Endothelial cell of umbilical vein (primary cell): ENCODE measurements at regions of chr11 and their contacts with region 1.

Region 1: GRCh38 chr11:57324886-57325734 is at the start of gene TNKS1BP1:
- DNase-seq: peak; percentile 96
- H3K4me3 ChIP-seq: peak within 1 kb of the TSS; percentile 58 to 86 (median 63)
- H3K27ac ChIP-seq: peak within 1 kb of the TSS; percentile 95
- H3K4me1 ChIP-seq: peaks cover 37% of the 10 kb centered on the region
- H3K27me3 ChIP-seq: no peaks in the 10 kb centered on the region
- CTCF ChIP-seq: no peak
- POLR2A ChIP-seq: peak; percentile 70
- total RNA-seq, gene TNKS1BP1: 93.6 and 111 TPM in 2 replicates

Region 2: DNA sequence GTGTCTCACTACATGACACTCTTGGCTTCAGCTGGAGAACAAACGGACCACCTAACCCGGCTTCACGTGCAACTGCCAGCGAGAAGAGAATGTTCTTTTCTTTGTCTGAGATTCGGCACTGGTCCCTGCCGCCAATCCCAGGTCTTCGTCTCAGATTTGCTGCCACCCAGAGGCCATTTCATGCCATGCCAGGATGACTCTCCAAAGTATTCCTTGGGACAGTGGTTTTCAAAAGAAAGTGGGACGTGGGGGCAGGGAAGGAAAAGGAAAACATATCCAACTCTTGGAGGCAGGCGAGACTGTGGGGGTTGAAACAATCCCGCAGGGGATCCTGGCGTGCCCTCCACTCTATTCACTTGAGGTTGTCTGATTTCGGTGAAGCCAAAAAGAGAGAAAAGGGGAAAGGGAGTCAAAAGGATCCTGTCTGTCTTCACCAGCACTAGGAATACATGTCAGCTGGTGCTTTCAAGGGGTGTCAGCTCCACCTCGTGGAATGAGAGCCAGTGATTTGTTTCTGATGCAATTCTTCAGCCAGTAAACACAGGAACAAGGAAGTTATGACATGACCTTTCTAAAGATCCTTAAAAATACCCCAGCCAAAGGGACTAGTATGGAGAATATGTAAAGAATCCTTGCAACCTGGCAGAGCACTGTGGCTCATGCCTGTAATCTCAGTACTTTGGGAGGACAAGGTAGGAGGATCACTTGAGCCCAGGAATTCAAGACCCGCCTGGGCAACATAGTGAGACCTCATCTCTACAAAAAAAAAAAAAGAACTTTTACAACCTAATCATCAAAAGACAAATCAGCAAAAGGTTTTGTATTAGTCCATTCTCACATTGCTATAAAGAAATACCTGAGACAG is 47.0 kb before region 1 on chr11:
- CTCF ChIA-PET with region 1: no interaction called
- POLR2A ChIA-PET with region 1: no interaction called
- dilution Hi-C with region 1: no loop called
- intact Hi-C with region 1: loop called (anchors 2 kb)
- DNase-seq: peak; percentile 92
- H3K4me3 ChIP-seq: peak overlapping the region in 1 of 3 experiments; percentile 25
- H3K27ac ChIP-seq: peak overlapping the region; percentile 65
- H3K4me1 ChIP-seq: peaks cover 32% of the 10 kb centered on the region
- H3K27me3 ChIP-seq: no peaks in the 10 kb centered on the region
- CTCF ChIP-seq: peak; percentile 83 to 96
- POLR2A ChIP-seq: no peak

Region 3: DNA sequence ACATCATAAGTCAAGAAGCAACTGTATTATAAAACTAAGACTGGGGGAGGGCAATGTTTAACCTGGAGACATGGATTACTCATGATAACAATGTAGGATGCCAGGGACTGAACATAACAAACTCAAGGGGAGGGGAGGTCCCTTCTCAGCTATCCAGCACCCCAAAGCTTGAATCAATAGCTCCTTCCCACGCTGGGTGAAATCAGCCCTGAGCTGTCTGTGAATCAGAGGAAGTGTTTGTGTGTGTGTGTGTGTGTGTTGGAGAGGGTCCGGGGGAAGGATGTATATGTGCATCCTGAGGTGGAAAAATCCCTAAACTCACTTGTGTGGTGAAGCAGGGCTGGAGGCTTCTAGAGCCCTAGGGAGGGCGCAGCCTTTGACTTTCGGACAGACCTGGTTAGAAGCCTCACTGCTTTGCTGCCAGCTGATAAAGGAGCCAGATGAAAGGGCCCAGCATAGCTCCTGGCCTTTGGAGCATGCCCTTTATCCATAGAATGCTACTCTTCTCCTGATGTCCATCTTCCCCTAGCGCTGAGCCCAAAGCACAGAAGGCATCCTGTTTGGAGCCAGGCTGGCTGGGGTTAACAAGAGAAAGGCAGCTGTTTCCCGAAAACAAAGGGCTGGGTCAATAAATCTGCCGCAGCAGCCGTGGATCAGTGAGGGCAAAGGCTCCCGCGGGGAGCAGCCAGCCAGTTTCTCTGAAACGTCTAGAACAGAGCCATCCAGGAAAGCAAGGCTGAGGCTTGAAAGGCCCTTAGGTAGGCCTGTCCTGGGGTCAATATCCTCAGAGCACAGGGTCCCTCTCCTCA is 36.1 kb before region 1 on chr11:
- CTCF ChIA-PET with region 1: interaction called, 4 read pairs
- POLR2A ChIA-PET with region 1: interaction called, 3 read pairs
- dilution Hi-C with region 1: no loop called
- intact Hi-C with region 1: loop called (anchors 2 kb)
- DNase-seq: peak; percentile 94
- H3K4me3 ChIP-seq: no peak overlapping the region
- H3K27ac ChIP-seq: peak overlapping the region; percentile 74
- H3K4me1 ChIP-seq: peaks cover 24% of the 10 kb centered on the region
- H3K27me3 ChIP-seq: no peaks in the 10 kb centered on the region
- CTCF ChIP-seq: no peak
- POLR2A ChIP-seq: peak; percentile 40

Region 4: DNA sequence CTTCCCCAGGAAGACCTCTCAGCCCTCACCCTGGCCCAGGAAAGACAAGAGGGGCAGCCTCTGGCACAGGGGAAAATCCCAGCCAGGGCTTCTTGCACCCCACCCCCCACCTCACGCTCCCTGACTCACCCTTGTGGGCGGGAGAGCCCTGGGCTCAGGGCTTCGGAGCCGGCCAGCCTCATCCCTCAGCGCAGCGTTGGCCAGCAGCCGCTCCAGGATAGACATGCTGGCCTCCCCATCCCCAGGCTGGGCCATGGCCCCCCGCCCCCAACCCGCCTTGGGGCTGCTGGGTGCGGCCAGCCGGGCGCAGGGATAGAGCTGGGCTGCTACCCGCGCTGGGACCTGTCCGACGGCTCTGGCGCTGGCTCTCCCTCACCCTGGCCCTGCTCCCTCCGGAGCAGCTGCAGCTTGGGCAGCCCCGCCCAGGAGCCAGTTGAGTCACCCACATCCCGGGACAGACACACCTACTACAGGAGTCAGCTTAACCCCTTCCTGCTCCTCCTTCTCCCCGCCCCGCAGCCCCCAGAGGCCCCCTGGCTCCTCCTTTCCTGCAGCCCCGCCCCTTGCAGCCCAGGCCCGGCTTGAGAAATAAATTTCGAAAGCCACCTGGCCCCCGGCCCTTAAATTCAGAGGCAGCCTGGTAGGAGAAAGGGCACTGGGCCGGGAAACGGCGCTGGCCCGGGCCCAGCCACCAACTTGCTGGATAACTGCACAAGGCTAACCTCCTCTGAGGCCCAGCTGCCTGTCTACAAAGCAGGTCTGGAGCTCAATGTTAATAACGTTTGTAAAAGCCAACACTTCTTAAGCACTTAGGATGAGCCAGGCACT is 13.8 kb before region 1 on chr11:
- CTCF ChIA-PET with region 1: interaction called, 37 read pairs
- POLR2A ChIA-PET with region 1: interaction called, 23 read pairs
- dilution Hi-C with region 1: no loop called
- intact Hi-C with region 1: loop called (anchors 1 kb)
- DNase-seq: peak; percentile 96
- H3K4me3 ChIP-seq: peak overlapping the region; percentile 0 to 56 (median 24)
- H3K27ac ChIP-seq: peak overlapping the region; percentile 53
- H3K4me1 ChIP-seq: peaks cover 18% of the 10 kb centered on the region
- H3K27me3 ChIP-seq: no peaks in the 10 kb centered on the region
- CTCF ChIP-seq: no peak
- POLR2A ChIP-seq: peak; percentile 81

Region 5: GRCh38 chr11:57335343-57336110 is 10.4 kb after region 1 on chr11 and contains the start of gene SSRP1:
- CTCF ChIA-PET with region 1: interaction called, 5 read pairs
- POLR2A ChIA-PET with region 1: interaction called, 4 read pairs
- dilution Hi-C with region 1: no loop called
- intact Hi-C with region 1: loop called (anchors 1 kb)
- DNase-seq: peak; percentile 77
- H3K4me3 ChIP-seq: peak within 1 kb of the TSS; percentile 58 to 82 (median 61)
- H3K27ac ChIP-seq: peak within 1 kb of the TSS; percentile 54
- H3K4me1 ChIP-seq: peaks cover 17% of the 10 kb centered on the region
- H3K27me3 ChIP-seq: peaks cover 4 to 9% of the 10 kb centered on the region in 2 experiments
- CTCF ChIP-seq: no peak
- POLR2A ChIP-seq: peak; percentile 82
- total RNA-seq, gene SSRP1: 140 and 146 TPM in 2 replicates

Region 6: DNA sequence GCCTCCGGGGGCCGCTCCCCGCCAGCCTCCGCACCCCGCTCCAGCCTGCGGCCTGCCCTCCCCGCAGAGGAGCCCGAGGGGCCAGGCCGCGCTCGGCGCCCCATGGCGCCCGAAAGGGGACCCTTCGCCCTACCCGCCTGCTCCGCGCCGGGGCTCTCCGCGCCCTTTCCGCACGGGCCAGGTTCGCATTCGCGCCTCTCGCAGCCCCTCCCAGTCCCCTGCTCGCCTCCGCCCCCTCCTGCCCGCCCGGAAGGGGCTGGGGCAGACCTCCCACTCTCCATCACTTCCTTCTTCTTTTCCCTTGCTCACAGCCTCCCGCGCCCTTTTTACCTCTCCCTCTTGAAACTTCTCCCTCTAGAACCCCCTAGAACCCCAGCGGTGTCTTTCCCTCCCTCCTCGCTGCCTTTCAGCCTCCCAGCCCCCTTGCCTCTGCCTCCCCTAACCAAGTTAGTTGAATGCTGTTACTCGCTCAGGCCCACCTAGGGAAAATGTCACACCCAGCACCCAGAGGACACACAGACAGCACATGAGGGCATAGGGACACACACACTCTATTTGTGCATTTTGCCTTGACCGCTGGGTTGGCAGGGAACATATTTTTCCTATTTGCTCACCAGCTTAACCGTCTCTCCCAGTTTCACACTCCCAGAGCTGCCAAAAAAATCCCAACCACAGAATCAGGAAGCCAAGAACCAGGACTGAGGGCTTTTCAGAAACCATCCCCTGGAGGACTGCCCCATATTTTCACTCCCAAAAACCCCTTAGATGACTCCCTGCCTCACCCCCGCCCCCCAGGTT is 102.0 kb after region 1 on chr11 and contains the start of gene SLC43A3:
- CTCF ChIA-PET with region 1: no interaction called
- POLR2A ChIA-PET with region 1: interaction called, 5 read pairs
- dilution Hi-C with region 1: no loop called
- intact Hi-C with region 1: loop called (anchors 1 kb)
- DNase-seq: peak; percentile 38
- H3K4me3 ChIP-seq: peak within 1 kb of the TSS; percentile 47 to 68 (median 59)
- H3K27ac ChIP-seq: peak within 1 kb of the TSS; percentile 81
- H3K4me1 ChIP-seq: peaks cover 33% of the 10 kb centered on the region
- H3K27me3 ChIP-seq: peaks cover 4 to 5% of the 10 kb centered on the region in 2 experiments
- CTCF ChIP-seq: no peak
- POLR2A ChIP-seq: peak; percentile 80
- total RNA-seq, gene SLC43A3: 68.9 and 89.4 TPM in 2 replicates

Region 7: GRCh38 chr11:57644748-57645688 is 319.9 kb after region 1 on chr11:
- CTCF ChIA-PET with region 1: no interaction called
- POLR2A ChIA-PET with region 1: no interaction called
- dilution Hi-C with region 1: no loop called
- intact Hi-C with region 1: loop called (anchors 5 kb)
- DNase-seq: peak; percentile 68
- H3K4me3 ChIP-seq: no peak overlapping the region
- H3K27ac ChIP-seq: no peak overlapping the region
- H3K4me1 ChIP-seq: peaks cover 14% of the 10 kb centered on the region
- H3K27me3 ChIP-seq: peaks cover 38 to 44% of the 10 kb centered on the region in 2 experiments
- CTCF ChIP-seq: peak; percentile 78 to 86
- POLR2A ChIP-seq: no peak